Activated CD8-positive, alpha-beta T cell treated with anti-CD3 and anti-CD28 coated beads for 36 hours (primary cell): ENCODE measurements at regions of chr22 and their contacts with region 1.

Region 1: GRCh38 chr22:21952586-21953571 is at the start of gene PPM1F:
- DNase-seq: peak; percentile 89
- ATAC-seq: peak; percentile 90
- H3K4me3 Mint-ChIP-seq: peak within 1 kb of the TSS; percentile 84
- H3K27ac Mint-ChIP-seq: peak within 1 kb of the TSS; percentile 75
- H3K4me1 Mint-ChIP-seq: peaks cover 13% of the 10 kb centered on the region
- H3K27me3 Mint-ChIP-seq: no peaks in the 10 kb centered on the region
- CTCF ChIP-seq: peak; percentile 78
- total RNA-seq, gene PPM1F: 18.2 to 18.8 TPM

Region 2: GRCh38 chr22:21657361-21658032 is 295.4 kb before region 1 on chr22:
- CTCF ChIA-PET with region 1: no interaction called
- POLR2A ChIA-PET with region 1: no interaction called
- intact Hi-C with region 1: loop called (anchors 5 kb)
- DNase-seq: peak; percentile 83
- ATAC-seq: peak; percentile 94
- H3K4me3 Mint-ChIP-seq: peak overlapping the region; percentile 82
- H3K27ac Mint-ChIP-seq: peak overlapping the region; percentile 22
- H3K4me1 Mint-ChIP-seq: peaks cover 13% of the 10 kb centered on the region
- H3K27me3 Mint-ChIP-seq: no peaks in the 10 kb centered on the region
- CTCF ChIP-seq: peak; percentile 56

Region 3: DNA sequence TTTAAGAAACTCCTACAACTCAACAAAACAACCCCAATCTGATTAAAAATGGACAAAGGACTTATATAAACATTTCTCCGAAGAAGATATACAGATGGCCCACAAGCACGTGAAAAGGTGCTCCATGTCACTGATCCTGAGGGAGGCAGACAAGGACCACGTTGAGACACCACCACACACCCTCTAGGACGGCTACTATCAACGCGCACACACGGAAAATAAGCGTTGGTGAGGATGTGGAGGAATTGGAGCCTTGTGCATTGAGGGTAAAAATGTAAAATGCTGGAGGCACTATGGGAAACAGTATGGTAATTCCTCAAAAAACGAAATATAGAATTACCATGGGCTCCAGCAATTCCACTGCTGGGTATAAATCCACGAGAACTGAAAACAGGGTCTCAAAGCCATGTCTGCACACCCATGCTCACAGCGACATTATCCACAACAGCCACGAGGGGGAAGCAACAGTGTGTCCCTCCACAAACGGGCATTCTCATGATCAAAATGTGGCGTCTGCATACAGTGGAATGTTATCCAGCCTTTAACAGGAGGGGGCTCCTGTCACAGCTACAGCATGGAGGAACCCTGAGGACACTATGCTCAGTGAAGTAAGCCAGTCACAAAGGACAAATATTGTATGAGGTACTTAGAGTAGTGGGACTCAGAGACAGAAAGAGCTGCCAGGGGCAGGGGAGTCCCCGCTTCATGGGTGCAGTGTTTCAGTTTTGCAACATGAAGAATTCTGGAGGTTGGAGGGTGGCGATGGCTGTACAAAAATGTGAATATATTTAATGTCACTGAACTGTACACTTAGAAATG is 239.8 kb before region 1 on chr22:
- CTCF ChIA-PET with region 1: interaction called, 16 read pairs
- POLR2A ChIA-PET with region 1: no interaction called
- intact Hi-C with region 1: loop called (anchors 2 kb)
- DNase-seq: peak; percentile 76
- ATAC-seq: peak; percentile 94
- H3K4me3 Mint-ChIP-seq: no peak overlapping the region
- H3K27ac Mint-ChIP-seq: no peak overlapping the region
- H3K4me1 Mint-ChIP-seq: peaks cover 7% of the 10 kb centered on the region
- H3K27me3 Mint-ChIP-seq: no peaks in the 10 kb centered on the region
- CTCF ChIP-seq: peak; percentile 92

Region 4: DNA sequence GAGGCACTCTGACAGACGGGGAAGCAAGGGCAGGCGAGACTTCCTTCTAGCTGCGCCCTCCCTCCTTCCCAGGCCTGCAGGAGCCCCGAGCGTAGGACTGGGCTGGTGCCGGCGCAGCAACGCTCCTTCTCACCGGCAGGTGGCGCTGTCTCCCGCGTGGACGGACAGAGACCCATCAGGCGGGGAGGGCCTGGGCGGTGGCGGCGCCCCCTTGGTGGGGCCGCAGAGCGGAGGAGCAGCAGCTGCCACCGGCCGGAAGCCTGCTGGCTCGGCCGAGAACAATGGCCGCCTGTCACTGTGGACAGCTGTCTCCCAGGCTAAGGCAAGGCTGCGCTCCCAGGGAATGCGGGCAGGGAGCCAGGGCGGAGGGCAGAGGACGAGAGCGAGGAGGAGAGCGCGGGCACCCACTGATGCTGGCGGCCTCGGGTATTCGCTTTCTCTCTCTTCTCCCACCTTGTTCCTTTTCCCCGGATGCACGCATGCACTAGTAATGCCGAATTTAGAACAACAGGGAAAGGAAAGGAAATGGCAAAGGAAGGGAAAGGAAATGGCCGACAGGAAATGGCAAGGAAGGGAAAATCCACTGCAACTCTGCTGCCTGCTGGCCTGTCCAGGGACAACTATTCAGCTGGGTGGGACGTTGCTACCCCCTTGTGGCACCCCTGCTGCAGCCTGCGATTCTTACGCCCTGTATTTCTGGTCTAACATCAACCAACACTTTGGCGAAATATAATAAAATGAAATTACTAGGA is 14.6 kb before region 1 on chr22:
- CTCF ChIA-PET with region 1: interaction called, 126 read pairs
- POLR2A ChIA-PET with region 1: interaction called, 10 read pairs
- intact Hi-C with region 1: no loop called
- DNase-seq: peak; percentile 93
- ATAC-seq: peak; percentile 96
- H3K4me3 Mint-ChIP-seq: peak overlapping the region; percentile 77
- H3K27ac Mint-ChIP-seq: peak overlapping the region; percentile 90
- H3K4me1 Mint-ChIP-seq: peaks cover 39% of the 10 kb centered on the region
- H3K27me3 Mint-ChIP-seq: no peaks in the 10 kb centered on the region
- CTCF ChIP-seq: peak; percentile 99

Region 5: GRCh38 chr22:21972293-21972779 is 19.5 kb after region 1 on chr22:
- CTCF ChIA-PET with region 1: interaction called, 18 read pairs
- POLR2A ChIA-PET with region 1: no interaction called
- intact Hi-C with region 1: no loop called
- DNase-seq: peak; percentile 70
- ATAC-seq: peak; percentile 88
- H3K4me3 Mint-ChIP-seq: no peak overlapping the region
- H3K27ac Mint-ChIP-seq: no peak overlapping the region
- H3K4me1 Mint-ChIP-seq: no peaks in the 10 kb centered on the region
- H3K27me3 Mint-ChIP-seq: no peaks in the 10 kb centered on the region
- CTCF ChIP-seq: peak; percentile 84

Region 6: DNA sequence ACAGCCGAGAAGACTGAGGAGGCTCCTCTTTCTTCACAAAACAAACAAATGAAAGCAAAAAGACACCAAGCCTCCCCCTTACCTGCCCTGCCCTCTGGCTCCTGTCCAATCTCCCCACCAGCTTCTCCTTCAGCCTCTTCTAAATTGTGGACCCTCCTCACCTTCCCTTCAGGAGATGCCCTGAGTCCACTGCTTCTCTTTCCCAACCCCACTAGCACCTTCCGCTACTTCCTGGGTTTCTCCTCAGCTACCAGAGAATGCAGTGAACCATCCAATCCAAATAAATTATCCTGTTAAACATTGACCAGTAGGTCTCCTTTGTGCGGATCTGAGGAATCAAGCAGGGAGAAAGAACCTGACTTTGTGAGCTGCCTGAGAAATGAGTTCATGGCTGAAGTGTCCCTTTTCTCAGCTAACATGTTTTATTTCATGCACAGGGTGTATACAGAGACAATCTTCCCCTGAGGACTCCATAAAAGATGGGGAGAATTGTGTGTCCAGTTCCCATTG is 228.5 kb after region 1 on chr22:
- CTCF ChIA-PET with region 1: no interaction called
- POLR2A ChIA-PET with region 1: no interaction called
- intact Hi-C with region 1: no loop called
- DNase-seq: no peak
- ATAC-seq: no peak
- H3K4me3 Mint-ChIP-seq: no peak overlapping the region
- H3K27ac Mint-ChIP-seq: no peak overlapping the region
- H3K4me1 Mint-ChIP-seq: no peaks in the 10 kb centered on the region
- H3K27me3 Mint-ChIP-seq: peaks cover 18% of the 10 kb centered on the region
- CTCF ChIP-seq: no peak